ENCODE measurements at regions of chr3 and their contacts with region 1.

Region 1: DNA sequence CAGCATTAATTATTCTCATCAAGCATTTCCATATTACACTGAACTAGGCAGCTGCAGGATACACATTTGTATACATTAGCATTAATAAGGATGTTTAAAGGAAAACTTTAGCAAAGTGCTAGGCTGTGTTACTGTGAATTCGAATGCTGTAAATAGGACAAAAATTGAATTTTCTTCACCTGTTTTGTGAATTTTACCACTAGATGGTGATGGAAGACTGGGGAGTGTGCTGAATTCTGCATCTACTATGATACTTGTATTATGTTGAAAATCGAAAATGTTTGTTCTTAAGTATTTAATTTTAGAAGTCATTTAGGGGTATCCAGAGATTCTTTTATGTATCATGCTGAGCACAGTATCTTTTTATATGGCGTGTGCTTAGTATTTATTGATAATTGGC is 12.3 kb upstream of the P2RY14 start:
- DNase-seq: peak; percentile 78
- ATAC-seq: peak; percentile 71
- H3K4me3 ChIP-seq: no peak overlapping the region
- H3K27ac ChIP-seq: no peak overlapping the region
- H3K4me1 ChIP-seq: no peaks in the 10 kb centered on the region
- H3K27me3 ChIP-seq: no peaks in the 10 kb centered on the region
- CTCF ChIP-seq: peak; percentile 91

Region 2: DNA sequence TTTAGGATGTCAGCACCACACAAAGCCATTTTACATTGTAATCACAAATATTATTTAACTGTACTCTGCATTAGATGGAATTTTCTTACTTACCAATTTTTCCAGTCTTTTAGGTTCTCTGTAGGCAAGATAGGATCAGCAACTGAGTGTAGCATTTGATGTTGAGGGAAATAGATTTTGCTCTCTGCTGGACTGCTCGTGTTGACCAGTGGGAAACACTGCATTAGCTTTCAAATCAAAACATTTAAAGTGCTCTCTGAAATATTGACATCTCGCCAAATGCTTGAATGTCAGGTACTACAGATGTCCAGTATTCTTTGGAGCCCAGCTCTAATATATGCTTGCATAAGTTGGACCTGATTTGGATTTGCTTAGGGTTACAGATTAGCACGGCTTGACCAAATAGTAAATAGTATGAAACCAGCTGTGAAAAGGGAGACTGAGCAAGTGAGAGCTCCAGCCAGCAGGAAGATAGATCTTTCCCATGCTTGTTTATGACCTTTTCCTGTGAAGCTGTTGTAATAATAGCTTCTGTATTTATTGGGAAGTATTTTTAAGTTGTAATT is 41.8 kb before region 1 on chr3:
- CTCF ChIA-PET with region 1: no interaction called
- POLR2A ChIA-PET with region 1: no interaction called
- intact Hi-C with region 1: no loop called
- DNase-seq: no peak
- ATAC-seq: no peak
- H3K4me3 ChIP-seq: no peak overlapping the region
- H3K27ac ChIP-seq: no peak overlapping the region
- H3K4me1 ChIP-seq: no peaks in the 10 kb centered on the region; the same call in 1 of the 2 replicates
- H3K27me3 ChIP-seq: no peaks in the 10 kb centered on the region; the same call in 1 of the 2 replicates
- CTCF ChIP-seq: no peak

Region 3: GRCh38 chr3:151316267-151316991 is 25.8 kb after region 1 on chr3 and contains the start of gene GPR87:
- CTCF ChIA-PET with region 1: interaction called, 19 read pairs
- POLR2A ChIA-PET with region 1: no interaction called
- intact Hi-C with region 1: loop called (anchors 2 kb)
- DNase-seq: peak; percentile 95
- ATAC-seq: peak; percentile 75
- H3K4me3 ChIP-seq: peak within 1 kb of the TSS; percentile 72
- H3K27ac ChIP-seq: peak within 1 kb of the TSS; percentile 89
- H3K4me1 ChIP-seq: peaks cover 76% of the 10 kb centered on the region
- H3K27me3 ChIP-seq: no peaks in the 10 kb centered on the region
- CTCF ChIP-seq: no peak
- total RNA-seq, gene GPR87: 13.3 and 14.5 TPM in 2 replicates

Region 4: DNA sequence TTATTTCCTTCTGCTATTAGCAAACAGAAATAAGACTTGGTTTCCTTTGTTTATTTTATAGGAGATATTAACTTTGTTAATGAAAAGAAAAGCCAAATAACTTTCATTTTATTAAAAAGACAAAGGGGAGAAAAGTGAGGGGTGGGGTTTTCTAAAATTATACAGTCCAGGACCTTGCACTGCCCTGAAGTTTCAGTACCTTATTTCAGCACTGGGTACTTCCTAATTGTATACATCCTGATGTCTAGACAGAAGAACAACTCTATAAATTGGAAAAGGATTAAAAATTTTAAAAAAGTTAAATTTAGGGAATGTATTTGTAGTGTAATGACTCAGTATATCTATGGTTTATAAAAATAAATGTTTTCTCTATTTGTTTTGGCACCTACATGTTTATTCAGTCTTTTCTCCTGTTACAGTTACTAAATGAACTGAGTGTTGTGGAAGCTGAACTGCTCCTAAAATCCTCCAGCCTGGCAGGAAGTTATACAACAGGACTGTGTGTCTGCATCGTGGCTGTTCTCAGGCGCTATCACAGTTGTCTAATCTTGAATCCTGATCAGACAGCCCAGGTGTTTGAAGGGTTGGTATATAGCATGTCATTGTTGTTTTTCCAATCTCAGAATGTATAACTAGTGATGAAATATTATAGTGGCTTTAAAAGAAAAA is 66.3 kb after region 1 on chr3:
- CTCF ChIA-PET with region 1: no interaction called
- POLR2A ChIA-PET with region 1: no interaction called
- intact Hi-C with region 1: loop called (anchors 2 kb)
- DNase-seq: peak; percentile 43
- ATAC-seq: peak; percentile 94
- H3K4me3 ChIP-seq: no peak overlapping the region
- H3K27ac ChIP-seq: no peak overlapping the region
- H3K4me1 ChIP-seq: peaks cover 14% of the 10 kb centered on the region; the same call in 1 of the 2 replicates
- H3K27me3 ChIP-seq: no peaks in the 10 kb centered on the region
- CTCF ChIP-seq: no peak

Region 5: DNA sequence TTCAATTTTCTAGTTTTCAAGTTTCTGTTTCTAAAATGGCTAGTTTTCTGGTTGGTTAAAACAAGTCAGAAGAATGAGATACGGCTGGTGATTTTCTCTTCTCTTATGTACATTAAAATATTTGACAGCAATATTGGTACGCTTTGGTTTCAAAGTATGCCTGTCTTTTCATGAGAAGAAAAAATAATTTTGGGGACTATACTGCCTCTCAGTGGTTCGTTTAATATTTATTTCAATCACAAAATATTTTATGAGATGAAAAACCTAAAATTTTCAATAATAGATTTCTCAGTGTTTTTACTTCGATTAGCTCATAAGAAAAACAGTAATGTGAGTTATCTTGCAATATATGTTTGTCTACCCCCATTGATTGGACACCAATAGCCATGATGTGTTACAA is 370.2 kb after region 1 on chr3:
- CTCF ChIA-PET with region 1: no interaction called
- POLR2A ChIA-PET with region 1: no interaction called
- intact Hi-C with region 1: loop called (anchors 1 kb)
- DNase-seq: peak; percentile 56
- ATAC-seq: no peak
- H3K4me3 ChIP-seq: no peak overlapping the region
- H3K27ac ChIP-seq: no peak overlapping the region
- H3K4me1 ChIP-seq: no peaks in the 10 kb centered on the region
- H3K27me3 ChIP-seq: no peaks in the 10 kb centered on the region
- CTCF ChIP-seq: peak; percentile 61

Measured in PC-3 (cell line).